IMR-90 (cell line): ENCODE measurements at regions of chr1 and their contacts with region 1.

Region 1: DNA sequence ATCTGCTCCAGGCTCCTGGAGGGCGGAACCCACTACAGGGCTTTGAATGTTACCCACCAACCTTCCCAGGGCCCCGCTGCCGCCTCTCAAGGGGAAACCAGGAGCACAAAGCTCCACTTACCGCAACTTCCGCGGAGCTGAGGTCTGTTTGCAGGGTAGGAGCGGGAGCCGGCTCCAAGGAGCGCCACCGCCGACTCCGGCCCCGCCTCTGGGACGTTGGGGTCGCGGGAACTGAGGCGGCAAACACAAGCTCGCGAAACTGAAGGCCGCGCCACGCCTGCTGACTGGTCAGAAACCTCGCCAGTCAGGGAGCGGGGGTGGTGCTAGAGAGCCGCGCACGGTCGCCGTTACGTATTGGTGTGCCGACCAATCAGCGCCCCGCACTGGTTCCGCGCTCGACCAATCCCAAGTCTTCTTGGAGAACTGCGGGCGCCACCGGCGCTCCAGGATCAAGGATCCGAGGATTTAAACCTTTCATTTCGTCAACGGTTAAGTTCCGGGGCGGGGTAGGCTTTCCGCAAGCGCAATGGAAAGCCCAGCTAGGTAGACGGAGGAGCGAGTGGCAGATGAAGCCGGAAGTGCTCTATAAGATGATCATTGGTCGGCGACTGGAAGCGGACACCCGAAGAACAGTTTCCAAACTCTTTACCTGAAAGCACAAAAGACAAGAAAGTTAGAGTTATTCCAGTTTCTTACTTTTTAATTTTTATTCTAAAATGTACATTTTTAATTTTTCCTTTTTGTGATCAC is at the start of gene STIL:
- DNase-seq: peak; percentile 100
- ATAC-seq: peak; percentile 96
- H3K4me3 ChIP-seq: peak within 1 kb of the TSS; percentile 62
- H3K27ac ChIP-seq: peak within 1 kb of the TSS; percentile 86
- H3K4me1 ChIP-seq: no peaks in the 10 kb centered on the region; the same call in 1 of the 2 replicates
- H3K27me3 ChIP-seq: no peaks in the 10 kb centered on the region
- CTCF ChIP-seq: no peak
- POLR2A ChIP-seq: peak; percentile 92
- RAD21 ChIP-seq: no peak
- total RNA-seq, gene STIL: 17.2 and 19.2 TPM in 2 replicates

Region 2: DNA sequence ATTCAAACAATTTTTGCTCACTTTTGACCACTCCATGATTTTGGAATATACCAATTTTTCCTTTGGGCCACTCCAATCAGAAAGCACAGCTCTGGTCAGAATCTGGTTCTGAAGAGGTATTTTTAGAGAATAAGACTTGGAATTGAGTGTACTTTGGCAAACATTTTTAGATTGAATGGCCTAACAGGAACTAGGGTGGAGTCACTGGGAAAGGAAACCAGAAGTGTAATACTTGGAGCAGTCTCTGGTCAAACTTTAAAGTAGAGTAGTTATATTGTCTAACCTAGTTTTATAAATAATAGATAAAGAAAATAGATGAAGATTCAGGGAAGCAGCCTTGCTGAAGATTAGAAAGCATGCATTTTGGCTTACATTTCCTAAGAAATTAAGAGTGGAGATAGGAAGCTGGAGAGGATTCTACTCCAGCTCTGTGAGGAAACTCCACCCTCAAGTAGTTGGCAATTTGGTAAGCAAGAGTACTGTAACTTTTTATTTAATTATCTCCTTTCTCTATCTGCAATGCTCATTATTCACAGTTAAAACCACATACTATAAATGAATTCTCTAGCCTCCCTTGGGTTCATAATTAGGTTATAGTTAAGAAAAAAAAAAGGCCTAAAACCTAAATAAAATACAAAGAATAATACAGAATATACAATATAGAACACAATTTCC is 15.9 kb before region 1 on chr1:
- CTCF ChIA-PET with region 1: interaction called, 9 read pairs
- POLR2A ChIA-PET with region 1: interaction called, 3 read pairs
- dilution Hi-C with region 1: no loop called
- in situ Hi-C with region 1: no loop called
- intact Hi-C with region 1: loop called (anchors 2 kb)
- DNase-seq: no peak
- ATAC-seq: no peak
- H3K4me3 ChIP-seq: no peak overlapping the region
- H3K27ac ChIP-seq: no peak overlapping the region
- H3K4me1 ChIP-seq: peaks cover 5% of the 10 kb centered on the region; the same call in 1 of the 2 replicates
- H3K27me3 ChIP-seq: no peaks in the 10 kb centered on the region
- CTCF ChIP-seq: no peak
- POLR2A ChIP-seq: no peak
- RAD21 ChIP-seq: no peak

Region 3: GRCh38 chr1:47333922-47334764 is 20.1 kb after region 1 on chr1:
- CTCF ChIA-PET with region 1: interaction called, 7 read pairs
- POLR2A ChIA-PET with region 1: interaction called, 4 read pairs
- dilution Hi-C with region 1: no loop called
- in situ Hi-C with region 1: no loop called
- intact Hi-C with region 1: loop called (anchors 1 kb)
- DNase-seq: peak; percentile 74
- ATAC-seq: peak; percentile 92
- H3K4me3 ChIP-seq: peak overlapping the region; percentile 86
- H3K27ac ChIP-seq: peak overlapping the region; percentile 88
- H3K4me1 ChIP-seq: peaks cover 6% of the 10 kb centered on the region
- H3K27me3 ChIP-seq: no peaks in the 10 kb centered on the region
- CTCF ChIP-seq: peak; percentile 7; the same call in 1 of the 2 replicates
- POLR2A ChIP-seq: peak; percentile 59
- RAD21 ChIP-seq: no peak

Region 4: GRCh38 chr1:47578026-47578720 is 264.1 kb after region 1 on chr1:
- CTCF ChIA-PET with region 1: no interaction called
- POLR2A ChIA-PET with region 1: no interaction called
- dilution Hi-C with region 1: no loop called
- in situ Hi-C with region 1: no loop called
- intact Hi-C with region 1: no loop called
- DNase-seq: no peak
- ATAC-seq: no peak
- H3K4me3 ChIP-seq: no peak overlapping the region
- H3K27ac ChIP-seq: no peak overlapping the region
- H3K4me1 ChIP-seq: no peaks in the 10 kb centered on the region; the same call in 1 of the 2 replicates
- H3K27me3 ChIP-seq: peaks cover 16% of the 10 kb centered on the region
- CTCF ChIP-seq: no peak
- POLR2A ChIP-seq: no peak
- RAD21 ChIP-seq: no peak

Region 5: GRCh38 chr1:48341221-48341620 is 1027.1 kb after region 1 on chr1:
- CTCF ChIA-PET with region 1: no interaction called
- POLR2A ChIA-PET with region 1: no interaction called
- dilution Hi-C with region 1: no loop called
- in situ Hi-C with region 1: no loop called
- intact Hi-C with region 1: no loop called
- DNase-seq: peak; percentile 3
- ATAC-seq: no peak
- H3K4me3 ChIP-seq: no peak overlapping the region
- H3K27ac ChIP-seq: no peak overlapping the region
- H3K4me1 ChIP-seq: no peaks in the 10 kb centered on the region
- H3K27me3 ChIP-seq: no peaks in the 10 kb centered on the region
- CTCF ChIP-seq: no peak
- POLR2A ChIP-seq: no peak
- RAD21 ChIP-seq: no peak